ENCODE measurements at regions of chr10 and their contacts with region 1.

Region 1: DNA sequence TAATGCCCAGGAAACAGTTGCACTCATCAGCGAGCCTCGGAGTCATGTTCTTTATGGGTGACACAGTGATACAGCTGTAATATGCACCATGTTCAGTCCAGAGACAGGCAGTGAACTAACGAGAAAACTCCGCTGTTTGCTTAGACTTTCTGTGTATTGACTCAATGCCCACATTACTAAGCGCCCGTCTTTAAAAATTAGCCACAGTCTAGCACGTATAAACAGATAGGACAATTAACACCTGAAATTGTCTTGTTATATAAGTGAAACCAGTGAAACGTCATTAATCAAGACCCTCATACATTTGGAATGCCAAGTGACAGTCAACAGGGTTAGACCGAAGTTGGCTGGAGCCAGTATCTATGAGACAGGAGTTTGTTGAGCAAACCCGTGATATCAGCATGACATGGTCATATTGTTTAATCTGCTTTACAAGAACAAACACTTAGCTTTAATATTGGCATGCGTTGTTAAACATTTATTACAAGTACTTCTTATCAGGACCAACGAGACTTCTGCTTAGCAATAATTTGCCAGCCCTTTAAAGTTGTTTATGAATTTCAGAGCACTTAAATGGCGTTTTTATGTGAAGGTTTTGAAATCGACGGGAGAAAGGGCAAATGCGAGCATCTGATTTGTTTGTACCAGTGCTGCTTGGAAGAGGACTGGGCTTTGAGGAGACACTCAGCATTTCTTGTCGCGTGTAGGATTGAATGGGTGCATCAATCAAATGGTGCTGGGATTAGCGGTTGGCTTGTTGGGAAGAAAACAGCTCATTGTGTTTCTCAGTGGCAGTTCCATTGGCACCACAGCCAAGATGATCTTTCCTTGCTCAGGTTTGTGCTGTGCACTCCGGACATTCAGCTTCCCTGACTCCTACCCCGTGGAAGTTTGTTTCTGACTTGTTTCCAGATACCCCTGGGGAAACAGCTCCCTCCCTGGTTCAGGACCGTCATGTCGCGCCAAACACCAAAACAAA is 56.3 kb downstream of the CAMK1D start:
- DNase-seq: no peak
- H3K4me3 Mint-ChIP-seq: no peak overlapping the region
- H3K27ac Mint-ChIP-seq: no peak overlapping the region
- H3K4me1 Mint-ChIP-seq: peaks cover 30% of the 10 kb centered on the region
- H3K27me3 Mint-ChIP-seq: peaks cover 11% of the 10 kb centered on the region

Region 2: DNA sequence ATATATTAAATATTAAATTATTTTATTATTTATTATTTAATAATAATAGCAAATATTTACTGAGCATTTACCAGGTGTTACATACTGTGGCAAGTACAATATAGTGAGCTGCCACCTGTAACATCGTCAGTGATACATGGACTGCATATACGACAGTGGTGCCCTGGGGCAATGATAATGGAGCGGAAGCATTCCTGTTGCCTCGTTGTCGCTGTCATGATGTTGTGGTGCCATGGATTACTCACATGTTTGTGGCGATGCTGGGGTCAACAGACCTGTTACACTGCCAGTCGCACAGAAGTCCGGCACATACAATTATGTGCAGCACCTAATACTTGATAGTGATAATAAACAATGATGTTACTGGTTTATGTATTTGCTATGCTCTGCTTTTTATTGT is 35.6 kb before region 1 on chr10:
- intact Hi-C with region 1: loop called (anchors 5 kb)
- DNase-seq: no peak
- H3K4me3 Mint-ChIP-seq: no peak overlapping the region
- H3K27ac Mint-ChIP-seq: no peak overlapping the region
- H3K4me1 Mint-ChIP-seq: peaks cover 14% of the 10 kb centered on the region
- H3K27me3 Mint-ChIP-seq: no peaks in the 10 kb centered on the region

Region 3: DNA sequence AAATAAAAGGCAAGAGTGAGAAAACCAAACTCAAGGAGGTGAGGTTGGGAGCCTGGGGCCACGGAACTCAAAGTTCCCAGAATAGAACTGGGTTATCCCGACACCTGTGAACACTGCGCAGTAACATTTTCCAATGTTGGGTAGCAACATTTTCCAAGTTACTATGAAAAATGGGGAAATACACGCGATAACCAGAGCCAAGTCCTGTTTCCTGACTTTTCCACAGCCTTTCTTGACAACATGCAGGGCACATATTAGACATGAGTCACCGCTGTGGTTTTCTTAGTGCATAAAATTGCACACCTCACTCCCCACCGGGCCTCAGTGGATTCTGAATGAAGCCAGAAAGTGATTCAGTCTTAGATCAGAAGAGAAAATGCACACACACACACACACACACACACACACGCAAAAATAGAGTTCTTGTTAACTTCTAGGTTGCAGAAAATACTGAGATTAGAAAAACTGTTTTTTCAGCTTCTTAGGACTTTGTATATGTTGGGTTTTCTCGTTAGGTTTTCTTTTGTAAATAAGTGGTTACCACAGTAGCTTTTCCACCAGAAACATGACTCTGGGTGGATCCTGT is 13.7 kb after region 1 on chr10:
- intact Hi-C with region 1: loop called (anchors 2 kb)
- DNase-seq: peak; percentile 13
- H3K4me3 Mint-ChIP-seq: no peak overlapping the region
- H3K27ac Mint-ChIP-seq: no peak overlapping the region
- H3K4me1 Mint-ChIP-seq: peaks cover 13% of the 10 kb centered on the region
- H3K27me3 Mint-ChIP-seq: peaks cover under 1% of the 10 kb centered on the region